ENCODE measurements at regions of chr10 and their contacts with region 1.

Region 1: DNA sequence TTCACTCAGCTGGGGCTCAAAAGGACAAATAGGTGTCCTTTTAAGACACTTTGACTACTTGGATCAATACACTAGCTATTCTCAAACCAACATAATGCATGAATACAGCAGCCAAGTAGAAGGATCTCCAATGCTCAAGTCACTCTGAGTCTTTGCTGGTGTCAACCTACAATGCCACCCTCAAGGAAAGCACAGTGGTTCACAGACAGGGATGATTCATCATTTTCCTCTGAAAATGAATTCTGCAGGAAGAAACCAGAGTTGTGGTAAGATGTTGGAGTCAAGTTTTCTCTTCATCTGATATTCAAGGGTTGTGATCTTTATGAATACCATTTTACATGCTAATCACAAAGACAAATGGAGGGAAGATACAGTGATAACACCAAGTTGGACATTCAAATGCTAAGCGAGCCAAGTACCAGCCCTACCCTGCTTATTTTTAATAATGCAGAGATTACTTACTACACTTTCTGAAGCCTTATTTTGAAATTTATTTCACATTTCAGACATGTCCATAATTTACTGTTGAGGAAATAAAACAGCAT is 143.1 kb upstream of the FGFR2 start:
- DNase-seq: no peak
- ATAC-seq: no peak
- H3K4me3 ChIP-seq: no peak overlapping the region
- H3K27ac ChIP-seq: no peak overlapping the region
- H3K4me1 ChIP-seq: no peaks in the 10 kb centered on the region
- H3K27me3 ChIP-seq: no peaks in the 10 kb centered on the region
- CTCF ChIP-seq: no peak

Region 2: GRCh38 chr10:121831777-121832176 is 90.5 kb after region 1 on chr10:
- CTCF ChIA-PET with region 1: no interaction called
- POLR2A ChIA-PET with region 1: no interaction called
- intact Hi-C with region 1: loop called (anchors 10 kb)
- DNase-seq: no peak
- ATAC-seq: no peak
- H3K4me3 ChIP-seq: no peak overlapping the region
- H3K27ac ChIP-seq: no peak overlapping the region
- H3K4me1 ChIP-seq: no peaks in the 10 kb centered on the region
- H3K27me3 ChIP-seq: no peaks in the 10 kb centered on the region
- CTCF ChIP-seq: no peak

Region 3: GRCh38 chr10:122213766-122214165 is 472.4 kb after region 1 on chr10:
- CTCF ChIA-PET with region 1: no interaction called
- POLR2A ChIA-PET with region 1: no interaction called
- intact Hi-C with region 1: no loop called
- DNase-seq: no peak
- ATAC-seq: no peak
- H3K4me3 ChIP-seq: no peak overlapping the region
- H3K27ac ChIP-seq: no peak overlapping the region
- H3K4me1 ChIP-seq: no peaks in the 10 kb centered on the region
- H3K27me3 ChIP-seq: no peaks in the 10 kb centered on the region
- CTCF ChIP-seq: no peak